Heart left ventricle (tissue), 16 donors: ENCODE measurements at regions of chr6 and their contacts with region 1.

Region 1: DNA sequence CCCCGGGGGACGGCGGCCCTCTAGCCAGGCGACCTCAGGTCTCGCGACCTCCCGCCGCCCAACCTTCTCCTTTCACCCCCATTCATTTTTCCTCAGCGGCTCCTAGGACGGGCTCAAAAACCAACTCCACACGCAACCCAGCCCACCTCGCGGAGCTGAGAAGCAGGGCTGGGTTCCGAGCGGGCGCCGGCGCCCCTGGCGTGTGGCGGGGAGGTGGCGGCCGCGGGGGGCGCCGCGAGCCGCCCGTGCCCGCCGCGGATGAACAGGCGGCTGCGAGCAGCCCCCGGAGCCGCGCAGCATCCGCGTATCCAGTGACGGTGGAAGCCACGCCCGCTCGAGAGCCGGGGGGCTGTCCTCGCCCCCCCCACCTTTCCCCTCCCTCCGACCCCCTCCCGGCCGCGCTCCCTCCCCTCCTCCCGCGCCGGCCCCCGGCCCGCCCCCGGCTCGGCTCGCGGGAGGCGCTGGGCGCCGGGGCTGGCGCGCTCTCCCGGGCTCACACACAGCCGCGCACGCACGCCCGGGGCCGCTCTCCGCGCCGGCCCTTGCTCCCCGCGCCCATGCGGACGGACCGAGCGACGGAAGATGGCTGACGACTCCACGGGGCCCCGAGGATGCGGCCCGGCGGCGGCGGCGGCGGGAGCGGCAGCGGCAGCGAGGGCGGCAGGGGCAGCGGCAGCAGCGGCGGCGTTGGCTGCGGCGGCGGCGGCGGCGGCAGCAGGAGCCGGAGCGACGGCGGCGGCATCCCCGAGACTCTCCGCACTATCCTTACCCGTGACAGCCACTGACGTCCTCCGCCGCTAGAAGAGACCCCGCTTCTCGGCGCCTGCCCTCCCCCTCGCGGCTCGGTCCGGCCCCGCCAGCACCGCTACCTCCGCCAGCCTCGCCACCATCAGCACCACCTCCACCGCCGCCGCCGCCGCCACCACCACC is at the start of gene SOBP:
- DNase-seq: peak; percentile 81 to 85 (median 83)
- ATAC-seq: peak in 3 of 4 donors; percentile 60 to 73 (median 61)
- H3K4me3 ChIP-seq: peak within 1 kb of the TSS; percentile 65 to 96 (median 82)
- H3K27ac ChIP-seq: peak within 1 kb of the TSS; percentile 48 to 90 (median 82)
- H3K4me1 ChIP-seq: peaks cover 0 to 50% (median 20%) of the 10 kb centered on the region in 12 donors
- H3K27me3 ChIP-seq: peaks cover 0 to 45% (median 0%) of the 10 kb centered on the region in 9 donors
- CTCF ChIP-seq: peak in 4 of 12 donors; percentile 20 to 38 (median 30)
- POLR2A ChIP-seq: no peak
- total RNA-seq, gene SOBP: 14.6 to 24.9 (median 16.5) TPM

Region 2: DNA sequence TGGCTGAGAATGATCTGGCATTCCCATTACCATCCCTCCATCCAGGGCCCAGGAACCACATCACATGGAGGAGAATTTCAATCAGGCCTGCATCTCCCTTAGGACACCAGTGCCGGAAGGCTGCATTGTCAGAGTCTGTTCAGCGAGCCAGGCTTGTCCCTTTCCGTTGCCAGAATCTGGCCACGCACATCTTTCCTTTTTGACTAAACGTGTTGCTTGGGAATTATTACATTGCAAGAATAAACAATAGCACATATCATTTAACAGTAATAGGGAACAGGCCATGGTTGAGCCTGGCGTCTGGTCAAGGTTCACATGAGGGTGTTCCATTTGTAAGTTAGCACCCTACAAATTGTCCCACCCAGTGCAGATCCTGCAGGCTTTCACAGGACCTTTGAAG is 42.8 kb after region 1 on chr6:
- intact Hi-C with region 1: loop called in 3 of 10 experiments (anchors 5 kb)
- DNase-seq: peak in 4 of 5 donors; percentile 32 to 50 (median 40)
- ATAC-seq: peak in 3 of 4 donors; percentile 74 to 76 (median 76)
- H3K4me3 ChIP-seq: no peak overlapping the region
- H3K27ac ChIP-seq: peak overlapping the region in 5 of 12 donors; percentile 4 to 32 (median 26)
- H3K4me1 ChIP-seq: peaks cover 0 to 44% (median 11%) of the 10 kb centered on the region in 12 donors
- H3K27me3 ChIP-seq: no peaks in the 10 kb centered on the region
- CTCF ChIP-seq: no peak
- POLR2A ChIP-seq: no peak

Region 3: GRCh38 chr6:107585815-107586435 is 96.0 kb after region 1 on chr6:
- intact Hi-C with region 1: loop called in 1 of 10 experiments (anchors 5 kb)
- DNase-seq: no peak
- ATAC-seq: no peak
- H3K4me3 ChIP-seq: no peak overlapping the region
- H3K27ac ChIP-seq: no peak overlapping the region
- H3K4me1 ChIP-seq: peaks cover 0 to 52% (median 12%) of the 10 kb centered on the region in 12 donors
- H3K27me3 ChIP-seq: no peaks in the 10 kb centered on the region
- CTCF ChIP-seq: no peak
- POLR2A ChIP-seq: no peak

Region 4: GRCh38 chr6:107645800-107646575 is 156.1 kb after region 1 on chr6:
- intact Hi-C with region 1: loop called in 5 of 10 experiments (anchors 5 to 10 kb)
- DNase-seq: peak; percentile 68 to 80 (median 72)
- ATAC-seq: peak in 3 of 4 donors; percentile 67 to 72 (median 67)
- H3K4me3 ChIP-seq: no peak overlapping the region
- H3K27ac ChIP-seq: peak overlapping the region in 7 of 12 donors; percentile 30 to 63 (median 37)
- H3K4me1 ChIP-seq: peaks cover 3 to 51% (median 33%) of the 10 kb centered on the region in 12 donors
- H3K27me3 ChIP-seq: no peaks in the 10 kb centered on the region
- CTCF ChIP-seq: no peak
- POLR2A ChIP-seq: no peak

Region 5: GRCh38 chr6:107674995-107675738 is 185.3 kb after region 1 on chr6:
- intact Hi-C with region 1: loop called in 3 of 10 experiments (anchors 5 to 10 kb)
- DNase-seq: peak; percentile 85 to 92 (median 87)
- ATAC-seq: peak; percentile 88 to 95 (median 94)
- H3K4me3 ChIP-seq: peak overlapping the region in 9 of 12 donors; percentile 7 to 46 (median 26)
- H3K27ac ChIP-seq: peak overlapping the region in 3 of 12 donors; percentile 16 to 57 (median 55)
- H3K4me1 ChIP-seq: peaks cover 0 to 32% (median 16%) of the 10 kb centered on the region in 12 donors
- H3K27me3 ChIP-seq: no peaks in the 10 kb centered on the region
- CTCF ChIP-seq: peak; percentile 83 to 95 (median 92)
- POLR2A ChIP-seq: no peak